ENCODE measurements at regions of chr22 and their contacts with region 1.

Region 1: GRCh38 chr22:30089655-30089974 is 9.4 kb downstream of the HORMAD2 start:
- DNase-seq: no peak
- H3K4me3 ChIP-seq: no peak overlapping the region
- H3K27ac ChIP-seq: peak overlapping the region in 1 of 2 experiments; percentile 12; a peak in 1 of 4 replicates
- H3K4me1 ChIP-seq: no peaks in the 10 kb centered on the region
- H3K27me3 ChIP-seq: no peaks in the 10 kb centered on the region
- CTCF ChIP-seq: no peak
- EP300 ChIP-seq: no peak
- RAD21 ChIP-seq: no peak

Region 2: GRCh38 chr22:29587938-29588699 is 501.5 kb before region 1 on chr22:
- CTCF ChIA-PET with region 1: interaction called, 19 read pairs
- POLR2A ChIA-PET with region 1: no interaction called
- DNase-seq: no peak
- H3K4me3 ChIP-seq: no peak overlapping the region
- H3K27ac ChIP-seq: peak overlapping the region in 1 of 2 experiments; percentile 34; a peak in 1 of 4 replicates
- H3K4me1 ChIP-seq: no peaks in the 10 kb centered on the region
- H3K27me3 ChIP-seq: no peaks in the 10 kb centered on the region
- CTCF ChIP-seq: no peak
- EP300 ChIP-seq: 0 out of 4 replicates have a peak, but pooled peaks of 1 of the 2 experiments have one; percentile 3
- RAD21 ChIP-seq: no peak

Region 3: GRCh38 chr22:29625090-29625825 is 464.4 kb before region 1 on chr22:
- CTCF ChIA-PET with region 1: interaction called, 53 read pairs
- POLR2A ChIA-PET with region 1: no interaction called
- DNase-seq: peak; percentile 49
- H3K4me3 ChIP-seq: peak overlapping the region in 1 of 2 experiments; percentile 15; a peak in 1 of 4 replicates
- H3K27ac ChIP-seq: peak overlapping the region; percentile 24 to 93; a peak in 3 of 4 replicates
- H3K4me1 ChIP-seq: peaks cover 5 to 59% of the 10 kb centered on the region in 2 experiments; a peak in 3 of 4 replicates
- H3K27me3 ChIP-seq: no peaks in the 10 kb centered on the region
- CTCF ChIP-seq: peak; percentile 96
- EP300 ChIP-seq: no peak
- RAD21 ChIP-seq: peak; percentile 71

Region 4: GRCh38 chr22:29727131-29727523 is 362.5 kb before region 1 on chr22:
- CTCF ChIA-PET with region 1: interaction called, 15 read pairs
- POLR2A ChIA-PET with region 1: no interaction called
- DNase-seq: peak; percentile 91
- H3K4me3 ChIP-seq: no peak overlapping the region
- H3K27ac ChIP-seq: no peak overlapping the region; a peak in 1 of 4 replicates
- H3K4me1 ChIP-seq: peaks cover 0 to 27% of the 10 kb centered on the region in 2 experiments; a peak in 1 of 4 replicates
- H3K27me3 ChIP-seq: no peaks in the 10 kb centered on the region
- CTCF ChIP-seq: peak; percentile 32
- EP300 ChIP-seq: no peak
- RAD21 ChIP-seq: peak; percentile 60

Region 5: GRCh38 chr22:30043161-30043560 is 46.5 kb before region 1 on chr22:
- CTCF ChIA-PET with region 1: interaction called, 10 read pairs
- POLR2A ChIA-PET with region 1: no interaction called
- DNase-seq: no peak
- H3K4me3 ChIP-seq: no peak overlapping the region
- H3K27ac ChIP-seq: peak overlapping the region in 1 of 2 experiments; percentile 91; a peak in 2 of 4 replicates
- H3K4me1 ChIP-seq: peaks cover 0 to 27% of the 10 kb centered on the region in 2 experiments; a peak in 3 of 4 replicates
- H3K27me3 ChIP-seq: no peaks in the 10 kb centered on the region
- CTCF ChIP-seq: no peak
- EP300 ChIP-seq: no peak
- RAD21 ChIP-seq: no peak